ENCODE measurements at regions of chr11 and their contacts with region 1.

Region 1: DNA sequence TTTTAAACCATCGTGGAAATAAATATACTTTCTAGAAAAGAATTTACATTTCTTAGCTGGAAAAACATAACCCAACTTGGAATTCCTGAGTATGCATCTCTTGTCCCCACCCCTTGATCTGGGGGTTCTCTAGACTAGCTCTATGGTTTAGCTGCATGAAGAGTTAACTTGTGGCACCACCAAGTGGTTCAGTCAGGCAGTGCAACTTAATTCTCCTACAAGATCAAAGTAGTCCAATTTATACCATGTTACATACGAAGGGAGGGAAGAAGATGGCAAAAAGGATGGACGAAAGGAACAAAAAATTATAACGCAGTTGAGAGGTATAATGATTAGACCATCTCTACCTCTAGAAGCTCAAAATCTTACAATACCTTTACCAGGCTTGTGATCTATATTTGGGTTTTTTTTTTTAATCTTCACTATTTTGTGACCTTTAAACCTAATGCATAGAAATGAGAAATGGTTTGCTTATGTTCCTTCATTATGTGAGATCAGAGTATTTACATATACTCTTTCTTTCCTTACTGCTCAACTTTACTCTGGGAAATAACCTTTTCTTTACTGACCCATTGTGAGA is 28.5 kb upstream of the ALKBH3 start:
- DNase-seq: peak; percentile 77
- H3K4me3 Mint-ChIP-seq: no peak overlapping the region
- H3K27ac Mint-ChIP-seq: no peak overlapping the region
- H3K4me1 Mint-ChIP-seq: peaks cover 8% of the 10 kb centered on the region
- H3K27me3 Mint-ChIP-seq: no peaks in the 10 kb centered on the region

Region 2: DNA sequence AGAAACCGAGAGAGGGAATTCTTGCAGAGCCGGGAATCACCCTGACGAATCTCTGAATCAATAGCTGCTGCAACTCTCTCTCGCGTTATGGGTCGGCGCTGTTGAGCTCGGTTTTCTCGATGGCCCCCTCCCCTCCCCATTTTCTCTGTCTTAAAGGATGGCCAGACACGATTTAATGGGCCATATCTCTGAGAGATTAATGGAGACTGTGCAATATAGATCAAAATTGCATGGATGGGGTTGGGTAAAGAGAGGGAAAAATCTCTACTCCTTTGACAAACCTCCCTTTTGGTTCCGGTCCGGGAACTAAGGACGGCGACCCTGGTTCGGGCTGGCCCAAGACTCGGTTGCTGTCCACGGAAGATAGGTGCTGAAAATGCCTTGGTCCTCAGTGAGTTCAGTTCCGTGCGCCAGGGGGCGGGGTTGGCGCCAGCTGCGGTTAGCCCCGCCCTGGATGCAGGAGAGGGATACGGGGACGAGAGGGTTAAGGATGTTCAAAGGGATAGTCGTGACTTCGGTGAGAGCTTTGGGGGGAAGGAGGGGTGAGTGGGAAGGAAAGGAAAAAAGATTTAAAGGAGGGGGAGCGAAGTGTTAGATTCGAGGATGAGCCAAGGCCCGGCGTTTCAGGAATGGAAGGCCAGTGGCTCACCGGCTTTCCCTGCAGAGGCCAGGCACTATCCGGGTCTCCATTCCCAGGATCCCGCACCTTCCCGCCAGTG is 275.2 kb before region 1 on chr11:
- CTCF ChIA-PET with region 1: interaction called, 11 read pairs
- DNase-seq: peak; percentile 60
- H3K4me3 Mint-ChIP-seq: no peak overlapping the region
- H3K27ac Mint-ChIP-seq: peak overlapping the region; percentile 2
- H3K4me1 Mint-ChIP-seq: peaks cover 43% of the 10 kb centered on the region
- H3K27me3 Mint-ChIP-seq: peaks cover 96% of the 10 kb centered on the region

Region 3: DNA sequence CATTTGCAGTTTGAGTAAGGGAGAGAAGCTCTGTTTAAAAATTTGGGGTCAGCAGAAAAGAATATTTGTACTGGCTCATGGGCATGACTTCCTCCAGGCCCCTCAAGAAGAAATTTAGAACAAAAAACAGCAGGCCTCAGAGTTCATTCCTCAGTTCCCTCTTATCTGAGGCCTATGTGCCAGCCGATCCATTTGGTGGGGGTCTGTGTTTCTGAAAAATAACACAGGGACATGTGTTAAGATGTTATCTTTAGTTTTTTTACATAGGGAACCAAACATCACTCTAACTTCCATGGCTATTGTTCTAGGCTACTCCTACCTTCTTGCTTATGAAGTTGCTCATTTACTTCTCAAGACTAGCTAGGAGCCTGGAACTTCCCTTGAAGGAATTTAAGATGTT is 187.9 kb before region 1 on chr11:
- CTCF ChIA-PET with region 1: no interaction called
- DNase-seq: no peak
- H3K4me3 Mint-ChIP-seq: no peak overlapping the region
- H3K27ac Mint-ChIP-seq: no peak overlapping the region
- H3K4me1 Mint-ChIP-seq: no peaks in the 10 kb centered on the region
- H3K27me3 Mint-ChIP-seq: peaks cover 7% of the 10 kb centered on the region

Region 4: GRCh38 chr11:43842021-43842420 is 10.1 kb before region 1 on chr11:
- CTCF ChIA-PET with region 1: interaction called, 18 read pairs
- DNase-seq: no peak
- H3K4me3 Mint-ChIP-seq: no peak overlapping the region
- H3K27ac Mint-ChIP-seq: no peak overlapping the region
- H3K4me1 Mint-ChIP-seq: no peaks in the 10 kb centered on the region
- H3K27me3 Mint-ChIP-seq: no peaks in the 10 kb centered on the region

Measured in activated naive CD4-positive, alpha-beta T cell treated with anti-CD3 and anti-CD28 coated beads, Interleukin-2, amount 10 ng/mL, durations not matched to agents 7 days and 5 days (primary cell).